Right cardiac atrium (tissue), 5 donors: ENCODE measurements at regions of chr2 and their contacts with region 1.

Region 1: DNA sequence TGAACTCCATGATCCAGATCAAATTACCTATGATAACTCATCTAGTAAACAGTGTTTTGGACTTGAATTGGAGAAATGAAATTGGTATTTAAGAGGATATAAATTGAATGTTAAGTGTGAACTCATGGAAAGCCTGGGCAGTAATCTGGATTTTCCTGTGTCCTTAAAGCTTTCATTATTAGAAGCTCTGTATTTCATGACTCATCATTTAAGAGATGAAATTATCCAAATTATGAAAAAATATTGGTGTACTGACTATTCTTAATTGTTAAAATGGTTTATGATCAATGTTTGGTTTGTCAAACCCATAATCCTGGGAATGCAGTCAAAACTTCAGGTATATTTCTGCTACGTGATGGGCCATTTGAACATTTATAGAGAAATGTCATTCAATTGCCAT is 332.2 kb upstream of the ST6GAL2 start:
- DNase-seq: no peak
- ATAC-seq: no peak
- H3K4me3 ChIP-seq: no peak overlapping the region
- H3K27ac ChIP-seq: no peak overlapping the region
- H3K4me1 ChIP-seq: no peaks in the 10 kb centered on the region
- H3K27me3 ChIP-seq: no peaks in the 10 kb centered on the region

Region 2: GRCh38 chr2:107182981-107183380 is 35.2 kb before region 1 on chr2:
- intact Hi-C with region 1: loop called in 1 of 4 experiments (anchors 2 kb)
- DNase-seq: no peak
- ATAC-seq: no peak
- H3K4me3 ChIP-seq: no peak overlapping the region
- H3K27ac ChIP-seq: no peak overlapping the region
- H3K4me1 ChIP-seq: no peaks in the 10 kb centered on the region
- H3K27me3 ChIP-seq: no peaks in the 10 kb centered on the region